ENCODE measurements at regions of chr1 and their contacts with region 1.

Region 1: DNA sequence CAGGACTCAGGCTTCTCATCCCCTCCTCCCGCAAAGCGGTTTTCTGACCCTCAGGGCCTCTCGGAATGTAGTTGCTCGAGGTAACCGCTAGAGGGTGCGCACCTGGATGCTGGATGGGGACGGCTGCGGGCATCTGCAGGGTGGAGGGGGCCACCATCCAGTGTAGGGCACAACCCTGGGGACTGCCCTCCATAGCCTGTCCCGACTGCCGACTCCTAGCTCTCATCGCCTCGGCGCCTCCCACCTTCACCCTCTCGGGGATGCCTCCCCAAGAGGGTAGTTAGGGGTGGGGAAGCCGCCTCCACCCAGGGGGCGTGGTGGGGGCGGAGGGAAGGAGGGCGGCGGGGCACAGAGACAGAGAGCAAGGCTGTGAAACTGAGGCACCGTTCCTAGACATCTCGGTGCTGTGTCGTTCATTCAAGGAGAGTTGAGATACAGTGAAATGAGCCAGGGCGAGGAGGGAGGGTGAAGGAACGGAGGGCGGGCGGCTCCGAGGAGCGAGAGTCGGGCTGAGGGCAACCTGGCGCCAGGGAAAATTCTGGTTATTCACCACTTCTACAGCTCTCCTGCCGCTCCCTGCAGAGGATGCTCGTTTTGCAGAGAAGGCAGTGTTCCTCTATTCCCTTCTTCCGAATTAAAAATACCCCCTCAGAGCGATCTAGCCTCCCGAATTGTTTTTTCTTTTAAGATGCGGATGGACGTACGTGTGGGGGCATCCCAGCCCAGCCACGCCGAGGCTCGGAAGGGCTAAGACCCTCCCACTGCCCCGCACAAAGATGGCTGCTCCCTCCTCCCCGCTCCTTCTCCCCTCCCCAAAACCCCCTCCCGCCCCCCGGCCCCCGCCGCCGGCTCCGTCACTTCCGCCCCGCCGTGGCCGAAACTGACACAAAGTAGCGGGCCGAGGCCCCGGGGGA is at the start of gene ATP8B2:
- DNase-seq: peak; percentile 71 to 87 (median 78)
- H3K4me3 ChIP-seq: peak within 1 kb of the TSS; percentile 93
- H3K4me3 Mint-ChIP-seq: peak within 1 kb of the TSS; percentile 96 to 98 (median 98)
- H3K27ac ChIP-seq: peak within 1 kb of the TSS; percentile 83
- H3K27ac Mint-ChIP-seq: peak within 1 kb of the TSS; percentile 76 to 98 (median 95)
- H3K4me1 ChIP-seq: peaks cover 39% of the 10 kb centered on the region
- H3K4me1 Mint-ChIP-seq: peaks cover 37 to 51% (median 43%) of the 10 kb centered on the region in 3 donors
- H3K27me3 ChIP-seq: no peaks in the 10 kb centered on the region
- H3K27me3 Mint-ChIP-seq: peaks cover 2 to 9% of the 10 kb centered on the region in 2 donors
- total RNA-seq, gene ATP8B2: 71.7 to 72.8 TPM

Region 2: DNA sequence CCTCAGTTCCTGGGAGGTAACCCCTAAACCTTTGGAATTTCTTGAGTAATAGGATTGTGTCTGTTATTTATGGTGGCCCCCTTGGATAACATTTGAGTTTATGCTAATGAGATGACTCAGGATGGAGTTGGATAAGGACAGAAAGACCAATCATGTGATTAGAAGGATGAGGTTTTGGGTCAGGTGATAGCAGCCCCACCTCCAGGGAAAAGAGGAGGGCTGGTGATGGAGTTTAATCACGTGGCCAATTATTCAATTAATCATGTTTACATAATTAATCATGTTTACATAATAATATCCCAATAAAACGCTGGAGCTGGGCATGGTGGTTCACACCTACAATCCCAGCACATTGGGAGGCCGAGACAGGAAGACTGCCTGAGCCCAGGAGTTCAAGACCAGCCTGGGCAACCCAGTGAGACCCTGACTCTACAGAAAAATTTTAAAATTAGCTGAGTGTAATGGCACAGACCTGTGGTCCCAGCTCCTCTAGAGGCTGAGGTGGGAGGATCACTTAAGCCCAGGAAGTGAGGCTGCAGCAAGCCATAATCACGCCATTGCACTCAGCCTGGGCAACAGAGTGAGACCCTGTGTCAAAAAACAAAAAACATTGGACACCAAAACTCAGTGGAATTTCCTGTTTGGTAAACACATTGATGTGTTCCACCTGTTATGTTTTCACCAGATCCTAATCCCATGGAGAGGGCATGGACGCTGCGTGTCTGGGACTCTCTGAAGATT is 243.4 kb before region 1 on chr1:
- CTCF ChIA-PET with region 1: no interaction called
- POLR2A ChIA-PET with region 1: no interaction called
- DNase-seq: no peak
- H3K4me3 ChIP-seq: no peak overlapping the region
- H3K4me3 Mint-ChIP-seq: no peak overlapping the region
- H3K27ac ChIP-seq: no peak overlapping the region
- H3K27ac Mint-ChIP-seq: no peak overlapping the region
- H3K4me1 ChIP-seq: no peaks in the 10 kb centered on the region
- H3K4me1 Mint-ChIP-seq: no peaks in the 10 kb centered on the region
- H3K27me3 ChIP-seq: no peaks in the 10 kb centered on the region
- H3K27me3 Mint-ChIP-seq: peaks cover 3 to 11% of the 10 kb centered on the region in 2 donors

Region 3: DNA sequence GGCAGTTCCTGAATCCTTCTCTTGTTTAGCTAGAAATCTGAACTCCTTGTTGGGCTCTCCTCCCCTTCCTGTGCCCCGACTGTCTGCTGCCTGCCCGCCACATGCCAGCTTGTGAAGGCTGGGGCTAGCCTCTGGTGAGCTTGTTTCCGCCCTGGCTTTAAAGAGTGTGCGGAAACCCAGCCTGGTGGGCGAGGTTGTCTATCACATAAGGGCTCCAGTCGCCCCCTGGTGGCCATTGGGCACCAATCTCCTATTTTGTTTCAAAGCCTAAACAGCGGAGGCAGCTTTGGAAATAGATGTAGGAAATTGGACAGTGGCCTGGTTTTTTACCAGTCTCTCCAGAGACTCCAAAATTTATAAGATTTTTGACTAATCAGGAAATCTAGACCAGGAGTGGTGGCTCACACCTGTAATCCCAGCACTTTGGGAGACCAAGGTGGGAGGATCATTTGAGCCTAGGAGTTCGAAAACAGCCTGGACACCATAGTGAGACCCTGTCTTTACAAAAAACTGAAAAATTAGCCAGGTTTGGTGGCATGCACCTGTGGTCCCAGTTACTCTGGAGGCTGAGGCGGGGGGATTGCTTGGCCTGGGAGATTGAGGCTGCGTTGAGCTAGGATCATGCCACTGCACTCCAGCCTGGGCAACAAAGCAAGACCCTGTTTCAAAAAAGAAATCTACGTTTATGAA is 10.2 kb after region 1 on chr1:
- CTCF ChIA-PET with region 1: interaction called, 591 read pairs
- POLR2A ChIA-PET with region 1: interaction called, 56 read pairs
- DNase-seq: peak; percentile 85 to 94 (median 86)
- H3K4me3 ChIP-seq: peak overlapping the region; percentile 38
- H3K4me3 Mint-ChIP-seq: peak overlapping the region; percentile 49 to 84 (median 60)
- H3K27ac ChIP-seq: no peak overlapping the region
- H3K27ac Mint-ChIP-seq: peak overlapping the region; percentile 86 to 98 (median 91)
- H3K4me1 ChIP-seq: peaks cover 82% of the 10 kb centered on the region
- H3K4me1 Mint-ChIP-seq: peaks cover 73 to 87% (median 82%) of the 10 kb centered on the region in 3 donors
- H3K27me3 ChIP-seq: no peaks in the 10 kb centered on the region
- H3K27me3 Mint-ChIP-seq: no peaks in the 10 kb centered on the region

Region 4: GRCh38 chr1:154342836-154343472 is 18.0 kb after region 1 on chr1:
- CTCF ChIA-PET with region 1: interaction called, 591 read pairs
- POLR2A ChIA-PET with region 1: interaction called, 56 read pairs
- DNase-seq: peak; percentile 69 to 87 (median 79)
- H3K4me3 ChIP-seq: peak overlapping the region; percentile 73
- H3K4me3 Mint-ChIP-seq: peak overlapping the region; percentile 86 to 92 (median 89)
- H3K27ac ChIP-seq: peak overlapping the region; percentile 59
- H3K27ac Mint-ChIP-seq: peak overlapping the region; percentile 92 to 99 (median 96)
- H3K4me1 ChIP-seq: peaks cover 94% of the 10 kb centered on the region
- H3K4me1 Mint-ChIP-seq: peaks cover 88 to 95% (median 93%) of the 10 kb centered on the region in 3 donors
- H3K27me3 ChIP-seq: no peaks in the 10 kb centered on the region
- H3K27me3 Mint-ChIP-seq: peaks cover 0 to 3% of the 10 kb centered on the region in 2 donors

Region 5: DNA sequence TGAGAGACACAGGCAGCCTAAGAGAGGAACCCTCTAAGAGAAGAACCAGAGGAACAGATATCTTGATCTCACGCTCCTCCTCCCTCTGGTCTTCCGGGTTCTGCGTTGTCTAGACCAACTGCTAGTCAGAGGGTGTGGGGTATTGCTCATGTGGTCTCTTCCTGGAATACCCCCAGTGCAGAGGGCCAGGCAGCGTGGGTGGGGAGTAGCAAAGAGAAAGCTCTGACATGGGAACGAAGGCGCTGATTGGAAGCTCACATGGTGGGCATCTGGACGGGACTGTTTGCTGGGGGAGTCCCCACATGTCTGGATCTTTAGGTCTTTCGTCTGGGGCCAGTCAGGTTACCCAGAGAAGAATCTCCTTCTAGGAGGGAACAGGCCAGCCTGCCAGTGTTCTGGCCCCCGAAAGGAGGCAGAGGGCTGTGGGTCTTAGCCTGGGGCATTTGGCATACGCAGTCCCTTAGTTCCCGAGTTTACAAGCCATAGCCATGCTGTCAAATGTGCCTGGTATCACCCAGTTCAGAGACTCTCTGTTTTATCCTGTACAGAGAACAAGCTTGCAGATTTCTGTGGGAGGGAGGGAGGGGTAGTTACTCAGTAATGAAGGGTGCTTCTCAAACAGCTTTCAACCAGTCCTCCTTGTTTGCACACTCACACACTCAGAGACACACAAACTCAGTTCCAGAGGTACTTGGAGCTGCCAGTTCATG is 61.9 kb after region 1 on chr1:
- CTCF ChIA-PET with region 1: interaction called, 4 read pairs
- POLR2A ChIA-PET with region 1: interaction called, 10 read pairs
- DNase-seq: peak; percentile 47 to 78 (median 61)
- H3K4me3 ChIP-seq: peak overlapping the region; percentile 16
- H3K4me3 Mint-ChIP-seq: peak overlapping the region; percentile 31 to 86 (median 80)
- H3K27ac ChIP-seq: peak overlapping the region; percentile 43
- H3K27ac Mint-ChIP-seq: peak overlapping the region; percentile 90 to 100 (median 97)
- H3K4me1 ChIP-seq: peaks cover 33% of the 10 kb centered on the region
- H3K4me1 Mint-ChIP-seq: peaks cover 28 to 34% (median 31%) of the 10 kb centered on the region in 3 donors
- H3K27me3 ChIP-seq: no peaks in the 10 kb centered on the region
- H3K27me3 Mint-ChIP-seq: no peaks in the 10 kb centered on the region

Measured in CD8-positive, alpha-beta memory T cell (primary cell).